MCF 10A (cell line): ENCODE measurements at regions of chr5 and their contacts with region 1.

Region 1: DNA sequence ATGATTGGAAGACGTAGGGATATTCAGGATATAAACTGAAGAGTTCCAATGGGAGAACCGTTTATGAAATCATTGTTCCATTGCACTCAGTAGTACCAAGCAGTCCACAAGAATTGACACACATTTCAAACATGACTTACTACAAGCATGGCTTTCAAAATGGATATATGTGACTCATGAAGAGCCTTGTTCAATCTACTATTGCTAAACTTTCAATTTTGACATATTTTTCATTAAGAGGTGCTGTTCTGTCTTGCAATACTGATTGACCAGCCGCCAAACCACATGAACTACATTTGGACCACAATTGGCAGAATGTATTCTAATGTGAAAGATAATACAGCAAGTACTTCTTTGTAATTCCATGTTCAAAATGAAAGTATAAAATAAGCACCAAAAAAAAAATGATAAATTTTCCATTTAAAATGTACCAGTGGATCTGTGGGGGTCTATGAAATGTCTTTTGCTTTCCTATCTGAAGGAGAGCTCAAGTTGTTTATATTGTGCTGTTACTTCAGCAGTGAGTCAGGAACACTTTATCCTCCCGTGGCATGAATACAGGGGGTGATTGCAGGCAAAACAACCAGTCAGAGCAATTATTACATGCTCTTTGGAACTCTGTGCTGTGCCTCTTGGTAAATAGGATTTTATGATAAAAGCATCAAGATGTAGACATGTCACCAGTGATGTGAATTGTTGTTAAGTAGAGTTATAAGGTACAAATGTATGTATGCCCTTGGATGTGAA is 366.0 kb downstream of the ARRDC3 start:
- DNase-seq: peak; percentile 87
- H3K4me3 Mint-ChIP-seq: peak overlapping the region; percentile 59
- H3K27ac Mint-ChIP-seq: peak overlapping the region; percentile 55
- H3K4me1 Mint-ChIP-seq: peaks cover 26% of the 10 kb centered on the region
- H3K27me3 Mint-ChIP-seq: no peaks in the 10 kb centered on the region
- CTCF ChIP-seq: no peak

Region 2: GRCh38 chr5:90696153-90696552 is 321.0 kb before region 1 on chr5:
- CTCF ChIA-PET with region 1: no interaction called
- POLR2A ChIA-PET with region 1: no interaction called
- intact Hi-C with region 1: no loop called
- DNase-seq: no peak
- H3K4me3 Mint-ChIP-seq: no peak overlapping the region
- H3K27ac Mint-ChIP-seq: no peak overlapping the region
- H3K4me1 Mint-ChIP-seq: no peaks in the 10 kb centered on the region
- H3K27me3 Mint-ChIP-seq: peaks cover 75% of the 10 kb centered on the region
- CTCF ChIP-seq: no peak

Region 3: GRCh38 chr5:90759119-90759518 is 258.0 kb before region 1 on chr5:
- CTCF ChIA-PET with region 1: no interaction called
- POLR2A ChIA-PET with region 1: no interaction called
- intact Hi-C with region 1: no loop called
- DNase-seq: no peak
- H3K4me3 Mint-ChIP-seq: no peak overlapping the region
- H3K27ac Mint-ChIP-seq: no peak overlapping the region
- H3K4me1 Mint-ChIP-seq: no peaks in the 10 kb centered on the region
- H3K27me3 Mint-ChIP-seq: peaks cover 93% of the 10 kb centered on the region
- CTCF ChIP-seq: no peak

Region 4: DNA sequence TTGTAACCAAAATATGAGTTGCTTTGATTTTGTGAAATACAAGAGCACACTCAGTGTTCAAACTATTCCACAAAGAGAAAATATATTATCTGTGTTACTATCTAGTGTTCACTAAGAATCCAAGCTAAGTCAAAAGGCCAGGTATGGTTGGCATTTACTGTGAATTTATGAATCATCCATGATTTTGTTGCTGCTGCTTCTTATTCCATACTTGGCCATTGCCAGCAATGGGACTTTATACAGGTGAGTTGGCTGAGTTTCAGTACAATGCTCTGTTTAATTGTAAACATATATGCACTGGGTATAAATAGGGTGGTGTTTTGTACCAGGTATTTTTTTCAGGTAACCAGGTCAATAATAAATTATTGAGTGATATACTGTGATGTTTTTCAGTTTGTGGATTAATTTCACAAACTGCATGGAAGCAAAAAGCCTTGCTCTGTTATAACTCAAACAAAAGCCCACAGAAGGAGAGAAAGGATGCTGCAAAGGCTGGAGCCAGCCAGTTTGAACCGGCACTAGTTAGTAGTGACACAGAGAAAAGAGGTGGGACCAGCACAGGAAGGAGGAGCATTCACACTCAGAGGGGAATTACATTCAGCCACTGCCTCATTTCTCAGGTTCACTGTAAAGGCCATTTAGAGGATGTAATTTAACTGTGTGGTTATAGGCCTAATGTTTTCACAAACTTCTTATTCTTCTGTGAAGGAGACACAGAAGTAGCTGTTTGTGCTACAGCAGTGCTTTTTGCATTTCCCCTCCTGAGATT is 76.7 kb before region 1 on chr5:
- CTCF ChIA-PET with region 1: no interaction called
- POLR2A ChIA-PET with region 1: interaction called, 11 read pairs
- intact Hi-C with region 1: no loop called
- DNase-seq: peak; percentile 42
- H3K4me3 Mint-ChIP-seq: no peak overlapping the region
- H3K27ac Mint-ChIP-seq: peak overlapping the region; percentile 20
- H3K4me1 Mint-ChIP-seq: peaks cover 19% of the 10 kb centered on the region
- H3K27me3 Mint-ChIP-seq: no peaks in the 10 kb centered on the region
- CTCF ChIP-seq: no peak

Region 5: GRCh38 chr5:90983148-90983547 is 34.0 kb before region 1 on chr5:
- CTCF ChIA-PET with region 1: interaction called, 4 read pairs
- POLR2A ChIA-PET with region 1: interaction called, 19 read pairs
- intact Hi-C with region 1: no loop called
- DNase-seq: peak; percentile 77
- H3K4me3 Mint-ChIP-seq: no peak overlapping the region
- H3K27ac Mint-ChIP-seq: peak overlapping the region; percentile 61
- H3K4me1 Mint-ChIP-seq: peaks cover 15% of the 10 kb centered on the region
- H3K27me3 Mint-ChIP-seq: no peaks in the 10 kb centered on the region
- CTCF ChIP-seq: no peak

Region 6: GRCh38 chr5:91027405-91028139 is 10.4 kb after region 1 on chr5:
- CTCF ChIA-PET with region 1: interaction called, 3 read pairs
- POLR2A ChIA-PET with region 1: interaction called, 12 read pairs
- intact Hi-C with region 1: no loop called
- DNase-seq: no peak
- H3K4me3 Mint-ChIP-seq: no peak overlapping the region
- H3K27ac Mint-ChIP-seq: no peak overlapping the region
- H3K4me1 Mint-ChIP-seq: peaks cover 15% of the 10 kb centered on the region
- H3K27me3 Mint-ChIP-seq: no peaks in the 10 kb centered on the region
- CTCF ChIP-seq: no peak

Region 7: DNA sequence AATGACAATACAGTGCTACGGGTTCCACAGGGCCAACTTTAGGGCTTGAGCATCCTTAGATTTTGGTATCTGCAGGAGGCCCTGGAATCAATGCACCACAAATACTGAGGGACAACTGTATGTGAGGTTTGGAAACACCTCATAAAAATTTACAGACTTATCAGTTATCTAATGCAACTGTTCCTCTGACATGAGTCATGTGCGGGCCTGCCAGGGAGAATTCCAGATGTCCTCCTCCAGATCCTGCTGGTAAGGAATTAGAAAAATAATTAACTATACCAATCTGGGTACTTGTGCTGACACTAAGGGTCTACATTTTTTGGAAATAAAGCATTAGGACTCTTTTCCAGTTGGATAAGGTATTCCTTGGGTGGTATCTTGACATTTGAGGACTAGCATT is 32.7 kb after region 1 on chr5:
- CTCF ChIA-PET with region 1: no interaction called
- POLR2A ChIA-PET with region 1: interaction called, 20 read pairs
- intact Hi-C with region 1: no loop called
- DNase-seq: peak; percentile 43
- H3K4me3 Mint-ChIP-seq: no peak overlapping the region
- H3K27ac Mint-ChIP-seq: peak overlapping the region; percentile 61
- H3K4me1 Mint-ChIP-seq: peaks cover 26% of the 10 kb centered on the region
- H3K27me3 Mint-ChIP-seq: no peaks in the 10 kb centered on the region
- CTCF ChIP-seq: no peak

Region 8: GRCh38 chr5:91059409-91059808 is 42.3 kb after region 1 on chr5:
- CTCF ChIA-PET with region 1: no interaction called
- POLR2A ChIA-PET with region 1: interaction called, 21 read pairs
- intact Hi-C with region 1: no loop called
- DNase-seq: no peak
- H3K4me3 Mint-ChIP-seq: no peak overlapping the region
- H3K27ac Mint-ChIP-seq: no peak overlapping the region
- H3K4me1 Mint-ChIP-seq: peaks cover 15% of the 10 kb centered on the region
- H3K27me3 Mint-ChIP-seq: no peaks in the 10 kb centered on the region
- CTCF ChIP-seq: no peak

Region 9: GRCh38 chr5:91074615-91075014 is 57.5 kb after region 1 on chr5:
- CTCF ChIA-PET with region 1: interaction called, 4 read pairs
- POLR2A ChIA-PET with region 1: interaction called, 29 read pairs
- intact Hi-C with region 1: no loop called
- DNase-seq: peak; percentile 41
- H3K4me3 Mint-ChIP-seq: no peak overlapping the region
- H3K27ac Mint-ChIP-seq: peak overlapping the region; percentile 28
- H3K4me1 Mint-ChIP-seq: peaks cover 38% of the 10 kb centered on the region
- H3K27me3 Mint-ChIP-seq: no peaks in the 10 kb centered on the region
- CTCF ChIP-seq: peak; percentile 15

Region 10: GRCh38 chr5:91651703-91652102 is 634.6 kb after region 1 on chr5:
- CTCF ChIA-PET with region 1: no interaction called
- POLR2A ChIA-PET with region 1: no interaction called
- intact Hi-C with region 1: no loop called
- DNase-seq: peak; percentile 79
- H3K4me3 Mint-ChIP-seq: no peak overlapping the region
- H3K27ac Mint-ChIP-seq: no peak overlapping the region
- H3K4me1 Mint-ChIP-seq: no peaks in the 10 kb centered on the region
- H3K27me3 Mint-ChIP-seq: peaks cover 14% of the 10 kb centered on the region
- CTCF ChIP-seq: no peak